ENCODE measurements at regions of chr11 and their contacts with region 1.

Region 1: DNA sequence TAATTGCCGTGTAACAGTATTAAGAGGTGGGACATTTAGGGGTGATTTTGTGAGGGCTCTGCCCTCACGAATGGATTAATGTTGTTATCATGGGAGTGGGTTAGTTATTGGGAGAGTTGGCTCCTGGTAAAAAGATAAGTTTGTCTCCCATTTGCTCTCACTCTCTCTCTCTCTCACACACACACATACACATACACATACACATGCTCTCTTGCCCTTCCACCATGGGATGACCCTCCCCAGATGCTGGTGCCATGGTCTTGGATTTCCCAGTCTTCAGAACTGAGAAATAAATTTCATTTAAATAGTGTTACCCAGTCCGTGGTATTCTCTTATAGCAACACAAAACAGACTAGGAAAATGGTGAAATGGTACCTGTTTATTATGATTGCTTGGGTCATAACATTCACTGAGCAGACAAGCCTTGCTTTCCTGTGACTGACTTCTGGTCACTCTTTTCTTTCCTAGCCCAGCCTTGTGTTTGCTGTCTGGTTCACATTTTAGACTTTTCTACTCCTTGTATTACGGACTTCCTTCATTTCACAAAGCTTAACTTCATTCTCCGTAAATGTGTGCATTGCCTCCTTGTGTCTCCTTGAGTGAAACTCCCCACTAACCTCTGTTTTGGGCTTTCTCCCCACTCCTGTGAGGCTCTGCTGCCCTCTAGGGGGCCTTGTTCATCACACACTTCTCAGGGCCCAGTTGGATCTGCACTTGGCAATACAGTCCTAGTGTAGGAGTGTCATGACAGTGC is 206.5 kb upstream of the CTSC start:
- DNase-seq: peak; percentile 92
- H3K4me3 Mint-ChIP-seq: no peak overlapping the region
- H3K27ac Mint-ChIP-seq: peak overlapping the region; percentile 57
- H3K4me1 Mint-ChIP-seq: peaks cover 7% of the 10 kb centered on the region
- H3K27me3 Mint-ChIP-seq: no peaks in the 10 kb centered on the region
- CTCF ChIP-seq: peak; percentile 98

Region 2: DNA sequence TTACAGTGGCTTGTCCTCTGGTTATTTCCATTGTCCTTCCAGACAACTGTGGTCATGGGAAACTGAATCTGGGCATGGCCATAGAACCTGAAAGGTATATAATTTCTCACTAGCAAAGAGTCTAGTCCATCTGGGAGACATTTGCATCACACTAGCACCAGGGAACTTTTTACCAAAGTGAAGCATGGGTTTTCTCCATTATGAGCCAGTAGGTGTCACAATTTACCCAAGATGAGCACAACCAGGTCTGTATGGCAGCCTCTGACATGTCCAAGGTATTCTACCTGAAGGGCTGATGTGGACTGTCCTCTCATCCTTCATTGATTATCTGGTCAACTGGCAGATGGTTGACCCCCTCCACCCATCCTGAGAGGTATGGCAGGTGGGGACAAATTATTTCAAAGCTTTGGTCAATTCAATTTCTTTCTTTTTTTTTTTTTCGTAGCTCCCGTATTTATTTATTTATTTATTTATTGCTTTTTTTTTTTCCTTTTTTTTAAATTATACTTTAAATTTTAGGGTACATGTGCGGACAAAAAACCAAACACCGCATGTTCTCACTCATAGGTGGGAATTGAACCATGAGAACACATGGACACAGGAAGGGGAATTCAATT is 1080.5 kb before region 1 on chr11:
- CTCF ChIA-PET with region 1: no interaction called
- POLR2A ChIA-PET with region 1: no interaction called
- intact Hi-C with region 1: loop called (anchors 1 kb)
- DNase-seq: peak; percentile 65
- H3K4me3 Mint-ChIP-seq: no peak overlapping the region
- H3K27ac Mint-ChIP-seq: no peak overlapping the region
- H3K4me1 Mint-ChIP-seq: no peaks in the 10 kb centered on the region
- H3K27me3 Mint-ChIP-seq: no peaks in the 10 kb centered on the region
- CTCF ChIP-seq: peak; percentile 61

Region 3: DNA sequence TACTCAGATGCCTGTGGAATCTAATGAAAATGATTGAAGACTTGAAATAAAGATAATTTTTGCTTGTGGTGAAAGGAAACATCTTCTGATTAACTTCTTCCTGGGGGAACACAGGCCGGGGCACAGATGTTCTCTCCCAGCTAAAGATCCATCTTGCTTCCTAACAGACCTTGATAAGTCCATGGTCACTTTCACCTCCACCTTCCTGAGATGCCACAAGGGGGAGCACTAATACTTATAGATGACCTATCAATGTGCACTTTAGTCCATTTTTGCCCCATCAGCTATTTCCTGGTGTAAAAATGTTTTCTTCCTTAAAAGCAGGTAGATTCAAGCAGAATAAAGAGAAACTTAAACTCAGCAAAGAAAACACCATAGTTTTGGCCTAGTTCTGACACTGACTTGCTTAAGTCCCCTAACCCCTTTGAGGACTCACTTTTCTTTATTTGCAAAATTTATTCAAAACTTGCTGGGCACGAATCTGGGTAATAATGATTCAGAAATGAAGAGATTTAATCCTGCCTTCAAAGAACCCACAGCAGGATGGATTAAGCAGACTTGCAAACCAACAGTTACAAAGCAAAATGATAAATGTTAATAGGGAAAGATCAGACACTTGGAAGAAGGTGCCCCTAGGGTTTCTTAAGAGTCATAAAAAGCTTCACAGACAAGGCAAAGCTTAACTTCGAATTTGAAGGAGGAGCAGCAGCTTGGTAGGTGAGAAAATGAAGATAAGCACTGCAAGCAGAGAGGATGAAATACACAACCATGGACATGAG is 527.5 kb before region 1 on chr11:
- CTCF ChIA-PET with region 1: interaction called, 97 read pairs
- POLR2A ChIA-PET with region 1: interaction called, 4 read pairs
- intact Hi-C with region 1: loop called (anchors 1 kb)
- DNase-seq: peak; percentile 83
- H3K4me3 Mint-ChIP-seq: no peak overlapping the region
- H3K27ac Mint-ChIP-seq: peak overlapping the region; percentile 43
- H3K4me1 Mint-ChIP-seq: peaks cover 6% of the 10 kb centered on the region
- H3K27me3 Mint-ChIP-seq: no peaks in the 10 kb centered on the region
- CTCF ChIP-seq: peak; percentile 68

Region 4: DNA sequence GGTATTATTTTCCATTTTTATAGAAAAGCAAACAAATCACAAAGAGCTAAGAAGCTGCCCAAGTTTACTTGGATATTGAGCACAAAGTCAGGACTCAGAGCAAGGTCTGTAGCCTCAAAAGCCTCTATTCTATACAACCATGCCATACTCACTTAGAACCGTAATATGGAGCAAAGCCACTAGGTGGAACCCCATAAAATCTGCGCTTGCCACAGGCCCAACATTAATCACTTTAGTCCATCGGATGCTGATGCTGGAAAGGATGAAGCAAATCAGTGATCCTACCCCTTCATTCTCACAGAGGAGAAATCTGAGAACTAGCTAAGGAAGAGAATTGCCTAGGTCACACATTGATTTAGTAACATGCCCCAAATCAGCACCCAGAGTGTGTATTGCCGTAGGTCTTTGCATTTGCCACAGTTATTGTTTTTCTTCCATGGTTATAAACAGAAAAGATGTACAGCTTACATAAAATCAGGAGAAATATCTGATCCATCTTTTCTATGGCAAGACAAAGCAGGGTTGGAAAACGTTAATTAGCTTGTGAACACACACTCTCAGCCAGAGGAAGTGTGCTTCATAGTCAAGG is 312.1 kb before region 1 on chr11:
- CTCF ChIA-PET with region 1: interaction called, 64 read pairs
- POLR2A ChIA-PET with region 1: no interaction called
- intact Hi-C with region 1: loop called (anchors 1 kb)
- DNase-seq: peak; percentile 59
- H3K4me3 Mint-ChIP-seq: no peak overlapping the region
- H3K27ac Mint-ChIP-seq: no peak overlapping the region
- H3K4me1 Mint-ChIP-seq: peaks cover 5% of the 10 kb centered on the region
- H3K27me3 Mint-ChIP-seq: no peaks in the 10 kb centered on the region
- CTCF ChIP-seq: peak; percentile 53

Region 5: DNA sequence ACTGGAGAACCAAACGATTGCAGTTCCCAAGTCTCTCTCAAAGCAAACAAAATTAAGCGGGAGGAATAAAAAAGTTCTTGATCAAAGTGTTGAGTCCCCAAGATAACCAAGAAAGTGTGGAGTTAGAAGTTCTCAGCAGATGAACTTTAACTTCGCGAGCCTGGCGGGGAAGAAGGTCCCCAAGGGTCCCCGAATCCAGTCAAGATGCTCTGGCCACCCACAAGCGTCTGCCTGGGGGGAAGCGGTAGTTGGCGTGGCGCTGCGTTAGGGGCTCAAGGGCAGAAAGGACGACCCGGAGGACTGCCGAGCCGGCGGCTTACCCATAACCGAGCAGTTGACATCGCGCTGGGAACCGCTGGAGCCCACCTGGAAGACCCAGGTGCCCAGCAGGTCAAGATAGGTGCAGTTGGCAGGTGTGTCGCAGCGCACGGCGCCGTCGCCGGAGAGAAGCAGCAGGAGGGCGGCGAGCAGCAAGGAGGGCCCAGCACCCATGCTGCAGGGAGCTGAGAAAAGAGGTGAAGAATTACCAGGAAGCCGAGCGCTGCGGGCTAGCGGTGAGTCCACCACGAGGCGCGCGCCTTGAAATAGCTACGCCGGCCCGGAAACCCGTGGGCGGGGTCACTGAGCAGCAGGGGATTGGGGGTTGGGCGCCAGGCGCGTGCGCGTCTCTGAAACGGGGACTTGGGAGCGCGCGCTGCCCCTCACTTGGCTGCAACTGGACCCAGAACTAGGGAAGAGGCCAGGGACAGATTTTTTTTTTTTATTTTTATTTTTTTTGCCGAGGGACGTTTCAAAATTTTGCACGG is 206.7 kb before region 1 on chr11 and contains the start of gene CTSC:
- CTCF ChIA-PET with region 1: interaction called, 6 read pairs
- POLR2A ChIA-PET with region 1: interaction called, 44 read pairs
- intact Hi-C with region 1: loop called (anchors 2 kb)
- DNase-seq: peak; percentile 96
- H3K4me3 Mint-ChIP-seq: peak within 1 kb of the TSS; percentile 99
- H3K27ac Mint-ChIP-seq: peak within 1 kb of the TSS; percentile 97
- H3K4me1 Mint-ChIP-seq: peaks cover 25% of the 10 kb centered on the region
- H3K27me3 Mint-ChIP-seq: no peaks in the 10 kb centered on the region
- CTCF ChIP-seq: no peak
- total RNA-seq, gene CTSC: 79.1 and 103 TPM in 2 replicates

Region 6: DNA sequence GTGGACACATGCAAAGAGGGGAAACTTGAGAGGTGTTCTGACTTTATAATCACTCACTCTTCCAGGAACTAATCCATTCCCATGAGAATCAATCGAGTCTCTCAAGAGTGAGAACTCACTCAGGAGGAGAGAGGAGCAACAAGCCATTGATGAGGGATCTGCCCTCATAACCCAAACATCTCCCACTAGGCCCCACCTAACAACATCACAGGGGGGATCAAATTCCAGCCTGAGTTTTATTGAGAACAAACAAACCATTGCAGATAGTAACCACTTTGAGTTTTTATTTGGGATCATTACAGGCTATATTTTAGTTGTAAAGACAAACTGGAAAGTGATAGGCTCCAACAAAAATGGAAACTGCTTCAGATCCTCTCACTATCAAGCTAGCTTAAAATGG is 122.3 kb after region 1 on chr11:
- CTCF ChIA-PET with region 1: no interaction called
- POLR2A ChIA-PET with region 1: no interaction called
- intact Hi-C with region 1: no loop called
- DNase-seq: no peak
- H3K4me3 Mint-ChIP-seq: no peak overlapping the region
- H3K27ac Mint-ChIP-seq: no peak overlapping the region
- H3K4me1 Mint-ChIP-seq: no peaks in the 10 kb centered on the region
- H3K27me3 Mint-ChIP-seq: no peaks in the 10 kb centered on the region
- CTCF ChIP-seq: no peak

Region 7: GRCh38 chr11:88861618-88862017 is 317.5 kb after region 1 on chr11:
- CTCF ChIA-PET with region 1: no interaction called
- POLR2A ChIA-PET with region 1: no interaction called
- intact Hi-C with region 1: no loop called
- DNase-seq: no peak
- H3K4me3 Mint-ChIP-seq: no peak overlapping the region
- H3K27ac Mint-ChIP-seq: no peak overlapping the region
- H3K4me1 Mint-ChIP-seq: no peaks in the 10 kb centered on the region
- H3K27me3 Mint-ChIP-seq: no peaks in the 10 kb centered on the region
- CTCF ChIP-seq: no peak

Measured in MCF 10A (cell line).